ENCODE measurements at regions of chr20 and their contacts with region 1.

Region 1: DNA sequence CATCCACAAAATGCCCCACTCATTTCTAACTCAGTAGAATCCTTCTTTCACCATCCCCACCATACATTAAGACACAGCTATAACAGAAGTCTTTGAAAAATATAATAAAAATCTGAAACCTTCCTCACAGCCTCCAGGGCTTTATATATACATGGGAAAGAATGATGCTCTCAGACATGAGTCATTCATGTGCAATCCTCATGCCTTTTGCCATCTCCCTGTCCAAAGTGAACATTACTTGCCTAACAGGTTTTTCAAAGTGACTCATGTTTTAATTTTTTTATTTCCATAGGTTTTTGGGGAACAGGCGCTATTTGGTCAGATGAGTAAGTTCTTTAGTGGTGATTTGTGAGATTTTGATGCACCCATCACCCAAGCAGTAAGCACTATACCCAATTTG is 162.7 kb downstream of the RALGAPA2 start:
- DNase-seq: no peak
- H3K4me3 Mint-ChIP-seq: no peak overlapping the region
- H3K27ac Mint-ChIP-seq: peak overlapping the region; percentile 14
- H3K4me1 Mint-ChIP-seq: peaks cover 27% of the 10 kb centered on the region
- H3K27me3 Mint-ChIP-seq: no peaks in the 10 kb centered on the region

Region 2: DNA sequence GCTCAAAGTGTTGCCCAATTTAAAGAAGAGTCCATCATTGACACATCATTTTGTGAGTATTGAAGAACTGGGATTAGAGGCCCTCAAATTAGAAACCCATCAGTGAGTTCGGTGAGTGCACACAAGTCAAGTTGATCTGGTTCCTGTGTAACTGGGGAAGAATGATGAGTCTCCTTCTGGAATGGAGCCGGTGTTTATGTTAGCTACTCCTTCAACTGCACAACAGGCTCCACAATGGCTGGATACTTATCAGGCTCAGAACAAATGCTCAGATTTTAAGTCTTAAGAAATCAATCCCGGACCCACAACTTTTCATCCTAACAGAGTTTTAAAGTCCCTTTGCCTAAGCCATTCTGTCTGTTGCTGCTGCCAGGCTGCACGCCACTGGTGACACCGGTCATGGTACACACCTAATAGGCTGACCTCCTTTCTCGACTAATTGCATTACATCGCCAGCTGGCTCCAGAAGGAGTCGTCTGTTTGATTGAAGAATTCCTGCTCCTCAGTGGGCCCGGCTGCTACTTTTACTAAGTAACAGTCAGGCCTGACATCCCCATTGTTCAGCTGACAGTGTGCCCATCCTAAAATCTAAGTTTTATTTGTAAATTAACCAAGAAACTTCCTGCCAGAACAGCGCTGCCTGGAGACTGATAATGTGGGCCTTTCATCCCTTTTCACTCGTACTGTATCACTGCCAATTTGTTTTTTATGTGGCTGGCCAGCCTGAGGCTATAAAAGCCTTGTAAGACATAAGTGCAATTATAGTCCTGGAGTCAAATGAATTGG is 51.4 kb before region 1 on chr20:
- intact Hi-C with region 1: loop called (anchors 2 kb)
- DNase-seq: peak; percentile 48
- H3K4me3 Mint-ChIP-seq: no peak overlapping the region
- H3K27ac Mint-ChIP-seq: peak overlapping the region; percentile 94
- H3K4me1 Mint-ChIP-seq: peaks cover 53% of the 10 kb centered on the region
- H3K27me3 Mint-ChIP-seq: no peaks in the 10 kb centered on the region

Region 3: DNA sequence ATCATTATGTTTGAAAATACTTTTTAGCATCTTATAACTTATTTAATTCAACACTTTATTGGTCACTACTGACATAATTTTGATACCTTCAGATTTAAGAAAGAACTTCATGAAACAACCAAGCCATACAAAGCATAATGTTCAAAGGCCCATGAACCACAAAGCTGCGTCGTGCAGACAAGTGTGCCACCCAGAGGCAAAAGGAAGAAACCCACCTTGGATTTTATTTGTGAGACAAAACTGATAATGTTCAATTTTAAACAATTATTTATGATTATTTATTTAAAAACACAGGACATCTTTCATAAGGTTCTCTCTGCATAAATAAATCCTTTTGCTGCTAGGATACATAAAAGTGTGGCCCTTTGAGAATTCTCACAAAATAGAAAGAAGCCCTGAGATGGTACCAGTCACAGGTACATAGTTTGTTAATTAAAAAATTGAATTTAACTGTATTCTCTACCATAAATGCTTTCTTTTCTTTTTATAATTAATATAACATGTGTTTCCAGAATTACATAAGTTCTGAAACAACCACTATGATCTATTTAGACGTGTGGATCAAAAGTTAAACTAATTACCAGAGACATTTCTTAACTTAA is 19.0 kb after region 1 on chr20:
- intact Hi-C with region 1: loop called (anchors 2 kb)
- DNase-seq: peak; percentile 73
- H3K4me3 Mint-ChIP-seq: no peak overlapping the region
- H3K27ac Mint-ChIP-seq: no peak overlapping the region
- H3K4me1 Mint-ChIP-seq: peaks cover 12% of the 10 kb centered on the region
- H3K27me3 Mint-ChIP-seq: no peaks in the 10 kb centered on the region

Region 4: DNA sequence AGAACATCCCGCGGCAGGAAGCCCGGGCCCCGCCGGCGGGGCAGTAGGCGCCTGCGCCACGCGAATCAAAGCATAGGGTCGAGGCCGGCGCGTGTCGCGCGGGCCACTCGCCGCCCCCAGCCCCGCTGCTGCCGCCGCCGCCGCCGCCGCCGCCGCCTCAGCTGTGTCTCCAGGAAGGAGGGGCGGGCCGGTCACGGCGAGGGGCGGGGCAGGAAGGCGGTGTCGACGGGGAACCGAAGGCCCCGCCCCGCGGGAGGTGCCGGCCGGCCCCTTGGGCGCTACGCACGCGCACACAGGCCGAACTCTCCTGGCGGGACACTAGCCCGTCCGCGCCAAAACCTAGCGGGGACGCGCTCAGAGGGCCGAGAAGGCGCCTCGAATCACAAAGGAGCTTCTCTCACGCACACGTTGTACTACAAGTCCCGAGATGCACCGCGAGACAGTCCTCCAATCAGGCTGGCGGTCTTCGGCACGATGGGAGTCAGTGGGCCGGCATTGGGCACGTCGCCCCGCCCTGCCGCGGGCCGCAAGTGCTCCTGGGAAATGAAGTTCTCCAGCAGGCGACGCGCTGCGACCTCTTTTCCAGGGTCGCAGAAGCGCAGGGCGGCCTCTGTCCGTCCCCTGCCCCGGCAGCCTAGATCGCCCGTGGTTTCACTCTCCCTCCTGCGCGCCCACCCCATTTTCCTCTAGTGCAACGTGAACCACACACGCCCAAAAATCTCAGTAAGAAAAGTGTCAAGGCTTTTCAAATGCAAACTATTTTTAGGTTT is 162.9 kb after region 1 on chr20 and contains the start of gene RALGAPA2:
- intact Hi-C with region 1: no loop called
- DNase-seq: peak; percentile 98
- H3K4me3 Mint-ChIP-seq: peak within 1 kb of the TSS; percentile 93
- H3K27ac Mint-ChIP-seq: peak within 1 kb of the TSS; percentile 93
- H3K4me1 Mint-ChIP-seq: peaks cover 32% of the 10 kb centered on the region
- H3K27me3 Mint-ChIP-seq: peaks cover 3% of the 10 kb centered on the region
- total RNA-seq, gene RALGAPA2: 14.6 and 18.7 TPM in 2 replicates

Region 5: DNA sequence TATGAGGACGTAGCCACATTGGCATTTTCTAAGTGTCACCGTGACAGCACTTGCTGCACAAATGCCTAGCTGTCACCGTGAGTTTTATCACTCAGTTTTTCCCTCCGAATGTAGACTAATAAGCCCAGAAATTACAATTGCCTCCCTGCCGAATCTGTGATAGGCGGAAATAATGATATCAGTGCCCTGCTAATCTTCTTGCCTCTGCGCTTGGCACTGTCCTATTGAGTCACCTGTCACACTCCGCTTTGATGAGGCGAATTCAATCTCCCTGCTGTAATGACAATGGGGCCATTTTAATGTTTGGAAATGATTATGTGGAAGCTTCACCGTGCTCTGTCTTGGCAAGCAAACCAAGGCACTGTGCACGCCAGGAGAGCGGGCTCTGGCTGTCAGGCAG is 443.7 kb after region 1 on chr20:
- intact Hi-C with region 1: no loop called
- DNase-seq: no peak
- H3K4me3 Mint-ChIP-seq: no peak overlapping the region
- H3K27ac Mint-ChIP-seq: no peak overlapping the region
- H3K4me1 Mint-ChIP-seq: no peaks in the 10 kb centered on the region
- H3K27me3 Mint-ChIP-seq: no peaks in the 10 kb centered on the region